ENCODE measurements at regions of chr13 and their contacts with region 1.

Region 1: DNA sequence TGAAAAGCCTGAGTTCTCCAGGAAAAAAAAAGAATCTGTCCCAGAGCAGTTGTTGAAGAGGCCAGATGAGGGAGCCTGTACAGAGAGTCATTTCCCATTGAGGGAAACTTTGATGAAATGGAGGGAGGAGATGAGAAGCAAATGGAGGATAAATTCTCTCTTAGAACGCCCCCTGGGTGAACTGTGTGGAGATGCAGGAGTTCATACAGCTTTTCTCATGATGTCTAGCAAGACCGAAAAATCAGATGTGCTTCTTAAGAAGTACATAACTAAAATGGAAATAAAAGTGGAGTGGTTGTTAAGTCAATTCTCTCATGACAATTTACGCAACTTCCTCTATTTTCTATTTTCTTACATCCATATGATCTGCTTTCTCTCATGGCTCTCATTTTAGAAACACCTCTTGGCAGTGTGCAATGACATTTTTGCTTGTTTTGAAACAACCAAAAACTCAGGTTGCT is 1263.1 kb downstream of the PCDH9 start:
- DNase-seq: no peak
- ATAC-seq: no peak
- H3K4me3 ChIP-seq: no peak overlapping the region
- H3K27ac ChIP-seq: no peak overlapping the region
- H3K4me1 ChIP-seq: no peaks in the 10 kb centered on the region
- H3K27me3 ChIP-seq: no peaks in the 10 kb centered on the region
- CTCF ChIP-seq: peak; percentile 33

Region 2: DNA sequence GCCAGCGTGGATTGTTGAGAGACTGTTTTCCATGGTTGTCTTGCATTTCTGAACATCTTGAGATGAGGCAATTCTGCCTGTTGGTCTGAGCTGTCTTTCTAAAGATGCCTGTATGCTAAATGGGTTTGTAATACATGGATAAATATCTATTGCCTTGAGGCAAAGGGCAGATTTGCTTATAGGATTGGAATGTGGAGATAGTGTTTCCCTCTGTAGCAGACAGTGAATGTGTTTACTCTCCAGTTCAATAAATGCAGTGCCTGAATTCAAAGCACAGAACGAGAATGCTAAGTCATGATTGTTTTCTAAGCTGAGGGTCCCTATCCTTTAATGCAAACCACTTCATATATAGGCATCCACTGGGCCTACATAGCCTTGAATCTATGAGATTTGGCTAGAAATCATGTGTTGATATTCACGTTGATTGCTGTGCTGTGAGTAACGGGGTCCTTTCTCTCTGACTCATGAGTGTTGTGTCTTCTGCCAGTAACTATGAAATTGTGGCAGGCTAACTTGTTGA is 1291.7 kb before region 1 on chr13:
- CTCF ChIA-PET with region 1: no interaction called
- POLR2A ChIA-PET with region 1: no interaction called
- in situ Hi-C with region 1: no loop called
- intact Hi-C with region 1: no loop called
- DNase-seq: peak; percentile 13
- ATAC-seq: peak; percentile 82
- H3K4me3 ChIP-seq: no peak overlapping the region
- H3K27ac ChIP-seq: peak overlapping the region; percentile 59
- H3K4me1 ChIP-seq: 0 out of 2 replicates have a peak, but pooled peaks cover 3% of the 10 kb centered on the region
- H3K27me3 ChIP-seq: no peaks in the 10 kb centered on the region
- CTCF ChIP-seq: no peak

Region 3: GRCh38 chr13:66128692-66129269 is 161.8 kb after region 1 on chr13:
- CTCF ChIA-PET with region 1: no interaction called
- POLR2A ChIA-PET with region 1: no interaction called
- in situ Hi-C with region 1: no loop called
- intact Hi-C with region 1: no loop called
- DNase-seq: no peak
- ATAC-seq: no peak
- H3K4me3 ChIP-seq: no peak overlapping the region
- H3K27ac ChIP-seq: no peak overlapping the region
- H3K4me1 ChIP-seq: no peaks in the 10 kb centered on the region
- H3K27me3 ChIP-seq: no peaks in the 10 kb centered on the region
- CTCF ChIP-seq: no peak

Region 4: GRCh38 chr13:66915596-66916185 is 948.7 kb after region 1 on chr13:
- CTCF ChIA-PET with region 1: interaction called, 10 read pairs
- POLR2A ChIA-PET with region 1: no interaction called
- in situ Hi-C with region 1: no loop called
- intact Hi-C with region 1: no loop called
- DNase-seq: no peak
- ATAC-seq: no peak
- H3K4me3 ChIP-seq: no peak overlapping the region
- H3K27ac ChIP-seq: no peak overlapping the region
- H3K4me1 ChIP-seq: no peaks in the 10 kb centered on the region
- H3K27me3 ChIP-seq: no peaks in the 10 kb centered on the region
- CTCF ChIP-seq: no peak

Measured in Panc1 (cell line).